GM23248 (cell line): ENCODE measurements at regions of chr3 and their contacts with region 1.

Region 1: DNA sequence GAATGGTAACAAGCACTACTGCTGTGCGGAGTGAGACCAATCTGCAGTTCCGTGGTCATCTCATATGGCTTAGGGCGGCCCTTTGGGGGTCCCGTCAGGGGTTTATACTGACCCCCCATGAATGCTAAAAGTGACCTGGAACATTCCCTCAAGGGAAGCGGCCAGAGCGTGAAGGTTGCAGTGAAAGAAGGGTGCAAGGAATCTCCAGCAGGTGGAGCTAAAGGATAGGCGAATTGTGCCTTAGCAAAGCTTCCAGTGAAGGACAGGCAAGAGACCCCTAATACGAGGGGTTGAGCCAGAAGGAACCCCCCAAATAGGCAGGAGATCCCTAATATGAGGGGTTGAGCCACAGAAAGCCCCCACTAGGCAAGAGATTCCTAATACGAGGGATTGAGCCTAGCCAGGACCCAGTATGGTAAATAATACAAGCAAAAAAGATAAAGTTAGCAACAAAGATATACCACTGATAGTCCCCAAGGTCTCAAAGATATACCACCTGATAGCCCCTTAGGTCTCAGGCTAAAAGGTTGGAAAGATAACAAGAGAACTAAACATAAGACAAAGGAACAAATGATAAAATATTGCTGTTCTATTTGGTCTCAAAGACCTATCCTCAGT is 32.8 kb downstream of the ZNF589 start:
- DNase-seq: peak; percentile 70
- H3K4me3 ChIP-seq: no peak overlapping the region
- H3K27ac ChIP-seq: no peak overlapping the region
- H3K4me1 ChIP-seq: no peaks in the 10 kb centered on the region
- H3K27me3 ChIP-seq: no peaks in the 10 kb centered on the region

Region 2: DNA sequence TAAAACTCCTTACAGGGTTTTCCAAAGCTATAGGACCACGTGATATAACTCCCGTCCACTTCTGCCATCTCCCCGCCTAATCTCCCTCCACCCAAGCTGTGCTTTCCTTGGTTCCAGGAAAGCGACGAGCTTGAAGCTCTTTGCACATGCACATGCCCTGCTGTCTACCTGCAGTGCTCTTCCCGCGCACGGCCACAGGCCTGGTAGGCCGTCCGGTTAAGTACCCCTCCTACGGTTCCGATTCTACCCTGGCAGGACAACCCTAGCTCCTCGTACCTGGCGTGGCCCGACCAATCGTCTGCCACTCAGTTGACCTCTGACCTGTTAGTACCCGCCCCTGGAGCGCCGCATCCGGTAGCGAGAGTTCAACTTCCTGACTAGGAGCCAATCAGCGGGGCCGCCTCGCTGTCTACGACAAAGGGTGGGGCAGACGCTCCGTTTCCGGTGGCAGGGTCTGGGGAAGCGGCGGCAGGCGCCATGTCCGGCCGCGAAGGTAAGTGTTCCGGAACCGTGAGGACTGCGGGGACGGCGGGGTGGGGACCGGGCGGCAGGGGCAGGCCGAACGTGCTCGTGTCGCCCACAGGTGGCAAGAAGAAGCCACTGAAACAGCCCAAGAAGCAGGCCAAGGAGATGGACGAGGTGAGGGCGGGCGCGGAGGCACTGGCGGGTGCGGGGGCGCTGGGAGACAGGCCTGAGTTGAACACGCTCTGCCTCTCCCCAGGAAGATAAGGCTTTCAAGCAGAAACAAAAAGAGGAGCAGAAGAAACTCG is 166.3 kb after region 1 on chr3 and contains the starts of genes CCDC51 and TMA7:
- in situ Hi-C with region 1: loop called (anchors 10 kb)
- DNase-seq: peak; percentile 99
- H3K4me3 ChIP-seq: peak within 1 kb of the TSS; percentile 87
- H3K27ac ChIP-seq: peak within 1 kb of the TSS; percentile 78
- H3K4me1 ChIP-seq: peaks cover 10% of the 10 kb centered on the region
- H3K27me3 ChIP-seq: no peaks in the 10 kb centered on the region
- total RNA-seq, gene CCDC51: 10.1 and 10.6 TPM in 2 replicates
- total RNA-seq, gene TMA7: 150 and 244 TPM in 2 replicates